Adrenal gland (tissue), 19 donors: ENCODE measurements at regions of chr17 and their contacts with region 1.

Region 1: DNA sequence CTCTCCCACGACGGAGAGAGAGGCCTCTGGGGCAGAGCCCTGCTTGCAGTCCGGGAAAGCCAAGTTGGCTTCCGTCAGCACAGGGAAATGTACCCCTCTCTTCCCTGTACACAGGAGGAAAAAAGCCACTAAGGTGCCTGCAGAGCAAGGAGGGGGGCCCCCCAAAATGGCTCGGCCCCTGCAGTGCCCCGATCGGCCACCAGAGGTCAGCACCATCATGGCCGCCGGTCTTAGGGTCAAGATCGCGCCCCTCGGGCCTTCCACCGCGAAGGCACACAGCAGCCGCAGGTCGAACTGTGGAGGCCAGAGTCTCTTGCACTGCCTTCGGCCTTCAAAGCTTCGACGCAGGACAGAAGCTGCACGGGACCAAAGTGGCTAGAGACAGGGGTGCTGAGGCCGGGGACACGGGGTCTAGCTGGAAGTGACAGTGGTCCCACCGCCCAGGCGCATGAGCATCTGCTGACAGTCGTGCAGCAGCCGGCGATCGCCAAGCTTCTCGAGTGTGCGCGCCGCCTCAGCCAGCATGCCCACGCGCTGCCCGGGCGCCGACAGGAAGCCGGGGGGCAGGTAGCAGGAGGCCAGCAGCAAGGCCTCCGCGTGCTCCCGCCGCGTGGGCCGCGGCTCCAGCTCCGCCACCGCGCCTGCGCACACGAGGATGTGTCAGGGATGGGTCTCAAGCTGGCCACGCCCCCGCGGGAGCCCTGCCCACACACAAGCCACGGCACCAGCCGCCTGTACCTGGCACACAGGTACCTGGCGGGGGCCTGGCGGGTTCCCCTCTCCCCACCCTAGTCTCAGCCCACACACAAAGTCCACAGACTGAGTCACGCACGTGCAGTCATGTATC is 24.4 kb downstream of the SREBF1 start:
- DNase-seq: peak; percentile 67 to 91 (median 81)
- H3K4me3 ChIP-seq: no peak overlapping the region
- H3K27ac ChIP-seq: peak overlapping the region in 4 of 5 donors; percentile 20 to 94 (median 72)
- H3K4me1 ChIP-seq: peaks cover 13 to 76% of the 10 kb centered on the region in 2 donors
- H3K27me3 ChIP-seq: no peaks in the 10 kb centered on the region
- CTCF ChIP-seq: peak; percentile 97 to 99 (median 98)
- POLR2A ChIP-seq: peak in 1 of 2 donors; percentile 18

Region 2: GRCh38 chr17:17859909-17860765 is 47.7 kb after region 1 on chr17:
- intact Hi-C with region 1: loop called (anchors 5 kb)
- DNase-seq: peak; percentile 58 to 86 (median 74)
- H3K4me3 ChIP-seq: no peak overlapping the region
- H3K27ac ChIP-seq: peak overlapping the region in 1 of 5 donors; percentile 13
- H3K4me1 ChIP-seq: peaks cover 17 to 35% of the 10 kb centered on the region in 2 donors
- H3K27me3 ChIP-seq: no peaks in the 10 kb centered on the region
- CTCF ChIP-seq: peak; percentile 93 to 98 (median 97)
- POLR2A ChIP-seq: no peak

Region 3: DNA sequence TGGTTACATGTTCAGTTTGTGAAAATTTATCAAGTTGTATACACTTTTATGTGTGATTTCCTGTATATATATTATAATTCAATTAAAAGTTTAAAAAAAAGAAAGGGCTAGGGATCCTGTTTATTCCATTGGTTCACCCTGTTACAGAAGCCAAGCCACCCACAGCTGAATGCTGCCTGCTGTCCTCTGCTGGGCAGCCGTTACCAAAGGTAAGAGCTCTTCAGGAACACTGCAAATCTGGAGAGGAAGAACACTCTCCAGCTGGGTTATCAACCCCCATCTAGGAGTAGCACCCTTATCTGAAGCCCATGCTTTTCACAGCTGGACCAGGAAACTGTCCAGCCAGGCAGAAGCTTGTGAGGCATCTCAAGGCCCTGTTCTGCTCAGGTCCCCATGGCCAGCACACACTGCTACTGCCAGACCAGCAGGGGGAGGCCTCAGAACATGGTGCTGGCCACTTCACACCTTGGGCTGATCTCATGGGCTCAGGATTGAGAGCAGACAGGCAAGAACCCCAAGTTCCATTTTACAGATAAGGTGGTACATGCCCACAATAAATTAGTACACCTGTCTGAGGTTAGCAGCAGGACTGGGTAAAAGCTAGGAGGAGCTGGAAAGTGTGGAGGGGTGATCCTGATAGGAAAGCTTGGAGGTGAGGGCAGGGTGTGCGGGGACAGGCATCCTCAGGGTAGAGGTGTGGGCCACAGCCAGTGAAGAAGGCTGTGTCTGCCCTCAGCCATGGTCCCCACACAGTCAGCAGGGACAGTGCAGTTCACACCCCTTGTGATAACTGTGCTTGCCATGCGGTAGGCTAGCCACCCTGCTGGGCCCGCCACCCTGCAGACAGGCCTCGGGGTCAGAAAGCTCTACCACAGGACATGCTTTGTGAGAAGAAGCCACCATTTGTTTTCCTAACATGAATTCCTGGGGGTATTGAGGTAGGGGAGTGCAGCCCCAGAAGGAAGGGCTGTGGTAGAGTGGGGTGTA is 78.6 kb after region 1 on chr17:
- intact Hi-C with region 1: no loop called
- DNase-seq: peak; percentile 67 to 89 (median 82)
- H3K4me3 ChIP-seq: no peak overlapping the region
- H3K27ac ChIP-seq: no peak overlapping the region
- H3K4me1 ChIP-seq: no peaks in the 10 kb centered on the region
- H3K27me3 ChIP-seq: no peaks in the 10 kb centered on the region
- CTCF ChIP-seq: peak; percentile 50 to 88 (median 86)
- POLR2A ChIP-seq: no peak

Region 4: GRCh38 chr17:18025945-18026776 is 213.7 kb after region 1 on chr17:
- intact Hi-C with region 1: loop called (anchors 5 to 10 kb)
- DNase-seq: peak in 2 of 7 donors; percentile 42 to 92
- H3K4me3 ChIP-seq: no peak overlapping the region
- H3K27ac ChIP-seq: peak overlapping the region in 1 of 5 donors; percentile 55
- H3K4me1 ChIP-seq: no peaks in the 10 kb centered on the region
- H3K27me3 ChIP-seq: no peaks in the 10 kb centered on the region
- CTCF ChIP-seq: no peak
- POLR2A ChIP-seq: no peak